ENCODE measurements at regions of chr7 and their contacts with region 1.

Region 1: DNA sequence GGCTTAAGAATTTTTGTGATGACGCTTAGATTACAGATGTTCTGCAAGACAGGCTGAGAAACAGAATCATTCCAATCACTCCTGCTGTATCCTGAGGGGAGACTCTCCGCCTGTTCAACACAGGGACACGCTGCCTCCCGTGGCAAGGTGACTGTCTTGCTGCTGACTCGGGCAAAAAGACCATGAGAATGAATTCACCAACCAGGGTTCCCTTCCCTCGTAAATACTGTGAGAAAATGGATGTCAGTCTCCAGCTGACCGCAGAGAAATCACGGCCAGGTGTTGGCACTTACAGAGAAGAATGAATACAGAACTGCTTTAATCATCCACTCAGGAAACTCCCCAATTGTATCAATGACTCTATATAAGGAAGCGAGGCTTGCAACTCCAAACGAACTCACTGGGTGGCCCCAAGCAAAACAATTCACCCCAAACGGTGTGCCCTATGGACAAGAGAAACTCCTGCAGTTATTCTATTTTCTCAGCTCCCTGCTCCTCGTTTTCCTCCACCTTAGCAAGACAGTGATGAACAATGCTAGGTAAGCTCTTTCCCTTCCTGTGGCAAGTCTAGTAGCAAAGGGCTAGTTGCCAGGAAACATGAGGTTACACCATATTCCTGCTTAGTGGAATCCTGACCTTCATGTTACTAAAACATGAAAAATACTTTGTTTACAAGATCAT is 22.8 kb downstream of the GNA12 start:
- DNase-seq: no peak
- ATAC-seq: no peak

Region 2: GRCh38 chr7:2709553-2710285 is 111.6 kb before region 1 on chr7:
- intact Hi-C with region 1: loop called (anchors 10 kb)
- DNase-seq: no peak
- ATAC-seq: peak; percentile 74